ENCODE measurements at regions of chr20 and their contacts with region 1.

Region 1: DNA sequence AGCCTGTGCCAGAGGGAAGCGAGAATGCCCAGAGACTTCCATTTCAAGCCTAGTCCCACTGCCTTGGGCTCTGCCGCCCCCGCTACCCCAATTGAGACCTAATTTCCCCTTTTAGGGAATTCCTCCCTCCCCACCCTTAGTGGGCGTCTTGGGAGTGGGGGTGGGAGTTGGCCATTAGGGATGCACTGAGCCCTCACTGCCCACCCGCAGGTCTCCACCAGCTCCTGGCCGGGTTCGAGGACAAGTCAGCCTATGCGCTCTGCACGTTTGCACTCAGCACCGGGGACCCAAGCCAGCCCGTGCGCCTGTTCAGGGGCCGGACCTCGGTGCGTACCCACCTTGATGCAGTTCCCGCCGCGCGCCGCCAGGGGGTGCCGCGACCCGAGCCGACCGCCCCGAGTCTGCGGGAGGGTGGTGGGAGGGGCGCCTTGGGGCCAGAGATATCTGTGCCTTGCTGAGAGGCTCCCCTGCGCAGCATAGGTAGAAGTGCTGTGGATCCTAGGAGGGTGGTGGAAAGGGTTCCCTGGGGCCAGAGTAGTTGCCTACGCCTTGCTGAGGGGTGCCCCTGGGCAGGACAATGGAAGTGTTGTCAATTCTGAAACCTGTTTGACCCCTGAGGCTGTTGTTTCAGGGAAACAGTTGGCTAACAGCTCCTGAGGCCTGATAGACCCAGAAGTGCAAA is 9.2 kb downstream of the ITPA start:
- DNase-seq: no peak
- H3K4me3 ChIP-seq: no peak overlapping the region
- H3K27me3 ChIP-seq: no peaks in the 10 kb centered on the region
- CTCF ChIP-seq: peak; percentile 92

Region 2: GRCh38 chr20:3041854-3042409 is 176.5 kb before region 1 on chr20:
- CTCF ChIA-PET with region 1: no interaction called
- POLR2A ChIA-PET with region 1: no interaction called
- DNase-seq: no peak
- H3K4me3 ChIP-seq: no peak overlapping the region
- H3K27me3 ChIP-seq: no peaks in the 10 kb centered on the region
- CTCF ChIP-seq: no peak

Region 3: GRCh38 chr20:3239026-3239866 is 20.8 kb after region 1 on chr20 and contains the start of gene SLC4A11:
- CTCF ChIA-PET with region 1: interaction called, 19 read pairs
- POLR2A ChIA-PET with region 1: no interaction called
- DNase-seq: peak; percentile 23
- H3K4me3 ChIP-seq: peak within 1 kb of the TSS; percentile 62
- H3K27me3 ChIP-seq: peaks cover 4% of the 10 kb centered on the region
- CTCF ChIP-seq: no peak
- polyA plus RNA-seq, gene SLC4A11: 0.94 and 1.2 TPM in 2 replicates

Region 4: DNA sequence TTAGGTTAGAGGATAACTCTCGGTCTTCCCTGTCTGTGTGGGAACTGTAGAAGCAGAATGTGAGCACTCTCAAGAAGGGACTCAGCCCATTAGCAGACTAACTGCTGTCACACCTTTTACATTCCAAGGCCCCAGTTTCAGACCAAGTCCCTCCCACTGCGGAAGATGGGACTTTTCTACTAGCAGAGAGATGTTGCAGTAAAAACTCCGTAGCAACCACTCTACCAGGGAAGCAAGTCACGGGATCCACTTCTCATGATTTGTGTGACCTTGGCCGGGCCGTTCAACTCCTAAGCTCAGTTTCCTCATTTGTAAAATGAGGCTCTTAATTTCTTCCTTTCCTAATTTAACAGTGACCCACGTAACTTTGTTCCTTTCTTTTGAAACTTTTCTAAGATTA is 97.7 kb after region 1 on chr20:
- CTCF ChIA-PET with region 1: interaction called, 21 read pairs
- POLR2A ChIA-PET with region 1: no interaction called
- DNase-seq: no peak
- H3K4me3 ChIP-seq: no peak overlapping the region
- H3K27me3 ChIP-seq: no peaks in the 10 kb centered on the region
- CTCF ChIP-seq: no peak

Measured in BJ (cell line).